Activated T-helper 2 cell treated with anti-CD3 and anti-CD28 coated beads, Interferon-gamma antibody, Interleukin-2, Interleukin-4, amounts not matched to agents 10 μg/mL and 5 μg/mL and 100 μg/mL, durations not matched to agents 14 hours and 24 hours and 36 hours (primary cell): ENCODE measurements at regions of chr5 and their contacts with region 1.

Region 1: GRCh38 chr5:43484106-43484849 is 613 bp upstream of the TMEM267 start:
- DNase-seq: peak; percentile 87
- H3K4me3 Mint-ChIP-seq: peak overlapping the region; percentile 93
- H3K27ac Mint-ChIP-seq: peak overlapping the region; percentile 99
- H3K4me1 Mint-ChIP-seq: peaks cover 41% of the 10 kb centered on the region
- H3K27me3 Mint-ChIP-seq: no peaks in the 10 kb centered on the region

Region 2: GRCh38 chr5:42950440-42951292 is 533.6 kb before region 1 on chr5:
- intact Hi-C with region 1: loop called (anchors 2 kb)
- DNase-seq: peak; percentile 61
- H3K4me3 Mint-ChIP-seq: peak overlapping the region; percentile 92
- H3K27ac Mint-ChIP-seq: peak overlapping the region; percentile 99
- H3K4me1 Mint-ChIP-seq: peaks cover 24% of the 10 kb centered on the region
- H3K27me3 Mint-ChIP-seq: peaks cover 2% of the 10 kb centered on the region

Region 3: DNA sequence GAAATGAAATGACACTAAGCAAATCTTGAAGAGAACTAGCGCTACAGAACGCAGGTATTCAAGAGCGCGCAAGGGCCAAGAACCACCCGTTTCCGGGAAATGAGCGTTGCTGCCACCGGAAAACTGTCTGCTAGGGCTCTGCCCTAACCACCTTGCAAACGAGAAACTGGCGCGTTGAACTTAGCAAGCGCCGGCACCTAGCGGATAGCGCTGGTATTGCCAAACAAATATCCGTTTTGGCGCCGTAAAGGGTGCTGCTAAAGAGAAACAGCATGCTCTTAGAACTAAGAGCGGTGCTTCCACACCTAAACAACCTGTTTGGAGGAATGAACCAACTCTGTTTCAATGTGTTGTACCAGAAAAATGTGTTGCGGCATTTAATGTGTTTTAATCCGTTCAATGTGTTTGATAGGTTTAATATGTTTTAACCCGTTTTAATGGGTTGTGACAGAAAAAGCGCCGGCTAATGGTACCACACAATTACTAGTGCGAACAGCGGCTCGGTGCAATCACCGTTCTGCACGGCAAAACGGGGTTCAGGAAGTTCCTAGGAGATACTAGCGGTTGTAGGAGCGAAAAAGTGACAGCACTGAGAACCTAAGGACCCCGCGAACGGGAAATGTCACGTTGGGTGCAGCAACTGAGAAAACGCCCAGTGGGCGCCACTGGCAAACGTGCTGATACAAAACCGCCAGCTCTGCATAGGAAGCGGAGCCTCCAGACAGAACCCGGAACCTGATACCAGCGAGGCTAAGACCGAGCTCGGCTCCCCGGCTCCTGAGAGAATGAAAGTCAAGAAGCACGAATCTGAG is 443.8 kb before region 1 on chr5 and contains the start of gene ANXA2R:
- intact Hi-C with region 1: loop called (anchors 2 kb)
- DNase-seq: peak; percentile 95
- H3K4me3 Mint-ChIP-seq: peak within 1 kb of the TSS; percentile 92
- H3K27ac Mint-ChIP-seq: peak within 1 kb of the TSS; percentile 97
- H3K4me1 Mint-ChIP-seq: peaks cover 47% of the 10 kb centered on the region
- H3K27me3 Mint-ChIP-seq: no peaks in the 10 kb centered on the region
- total RNA-seq, gene ANXA2R: 2.1 and 2.5 TPM in 2 replicates

Region 4: DNA sequence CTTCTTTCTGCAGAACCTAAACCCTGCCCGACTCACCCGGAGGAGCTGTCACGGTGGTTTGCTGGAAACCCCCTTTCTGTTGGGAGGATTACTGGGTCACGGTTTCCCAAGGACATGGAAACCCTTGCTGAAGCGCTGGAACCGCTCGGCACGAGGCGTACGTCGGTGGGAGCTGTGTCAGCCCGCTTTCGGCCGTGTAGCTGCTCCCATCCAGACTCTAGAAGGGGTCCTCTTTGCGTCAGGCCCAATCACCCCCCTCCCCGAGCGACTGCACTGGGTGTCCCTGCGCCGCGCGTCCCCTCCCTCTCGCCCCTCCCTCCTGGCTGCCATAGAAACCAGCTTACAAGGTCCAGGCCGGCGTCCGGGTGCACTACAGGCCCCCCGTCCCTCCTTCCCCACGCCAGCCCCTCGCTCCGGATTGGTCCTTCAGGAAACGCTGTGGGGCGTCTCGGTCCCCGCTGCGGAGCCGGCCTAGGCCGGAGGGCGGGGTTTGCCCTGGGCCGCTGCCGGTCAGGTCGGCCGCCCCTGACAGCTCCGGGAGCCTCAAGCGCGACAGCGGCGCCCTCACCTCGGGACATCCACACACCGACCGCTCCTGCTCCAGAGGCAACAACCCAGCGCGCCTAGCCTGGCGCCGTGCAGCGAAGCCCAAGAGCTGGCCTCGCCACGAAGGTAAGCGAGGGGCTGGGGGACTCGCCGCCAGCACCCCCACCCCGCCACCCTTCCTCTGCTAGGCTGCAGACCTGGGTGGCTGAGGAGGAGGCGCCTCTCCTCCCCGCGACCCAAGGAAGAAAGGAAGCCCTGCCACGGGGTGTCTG is 292.3 kb before region 1 on chr5 and contains the start of gene NIM1K:
- intact Hi-C with region 1: loop called (anchors 10 kb)
- DNase-seq: peak; percentile 35
- H3K4me3 Mint-ChIP-seq: peak within 1 kb of the TSS; percentile 82
- H3K27ac Mint-ChIP-seq: peak within 1 kb of the TSS; percentile 59
- H3K4me1 Mint-ChIP-seq: peaks cover 24% of the 10 kb centered on the region
- H3K27me3 Mint-ChIP-seq: peaks cover 10% of the 10 kb centered on the region
- total RNA-seq, gene NIM1K: 0.76 and 1.1 TPM in 2 replicates

Region 5: GRCh38 chr5:43396762-43397304 is 87.4 kb before region 1 on chr5:
- intact Hi-C with region 1: loop called (anchors 1 kb)
- DNase-seq: peak; percentile 64
- H3K4me3 Mint-ChIP-seq: peak overlapping the region; percentile 97
- H3K27ac Mint-ChIP-seq: peak overlapping the region; percentile 98
- H3K4me1 Mint-ChIP-seq: peaks cover 22% of the 10 kb centered on the region
- H3K27me3 Mint-ChIP-seq: no peaks in the 10 kb centered on the region

Region 6: DNA sequence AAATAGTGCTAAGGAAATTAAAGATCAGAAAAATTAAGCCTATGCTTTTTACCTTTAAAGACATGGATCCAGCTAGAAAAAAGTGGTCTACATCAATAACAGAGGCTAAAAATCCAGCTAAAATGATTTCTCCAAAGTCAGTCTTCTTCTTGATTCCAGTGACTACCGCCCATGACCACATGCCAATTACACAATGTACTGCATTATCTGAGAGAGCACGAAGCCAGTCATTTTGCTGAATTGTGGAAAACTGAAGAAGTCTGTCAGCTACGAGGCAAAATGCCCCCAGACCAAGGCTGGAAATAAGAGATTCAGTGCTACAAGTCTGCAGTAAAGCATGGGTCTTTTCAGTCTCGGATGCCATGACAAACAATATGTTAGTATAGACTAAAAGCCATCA is 30.7 kb before region 1 on chr5:
- intact Hi-C with region 1: no loop called
- DNase-seq: no peak
- H3K4me3 Mint-ChIP-seq: no peak overlapping the region
- H3K27ac Mint-ChIP-seq: no peak overlapping the region
- H3K4me1 Mint-ChIP-seq: no peaks in the 10 kb centered on the region
- H3K27me3 Mint-ChIP-seq: no peaks in the 10 kb centered on the region

Region 7: GRCh38 chr5:43556857-43557542 is 72.7 kb after region 1 on chr5 and contains the start of gene PAIP1:
- intact Hi-C with region 1: loop called (anchors 1 kb)
- DNase-seq: peak; percentile 84
- H3K4me3 Mint-ChIP-seq: peak within 1 kb of the TSS; percentile 86
- H3K27ac Mint-ChIP-seq: peak within 1 kb of the TSS; percentile 90
- H3K4me1 Mint-ChIP-seq: peaks cover 8% of the 10 kb centered on the region
- H3K27me3 Mint-ChIP-seq: peaks cover 9% of the 10 kb centered on the region
- total RNA-seq, gene PAIP1: 56.8 and 58.0 TPM in 2 replicates